Naive thymus-derived CD4-positive, alpha-beta T cell (primary cell): ENCODE measurements at regions of chr13 and their contacts with region 1.

Region 1: DNA sequence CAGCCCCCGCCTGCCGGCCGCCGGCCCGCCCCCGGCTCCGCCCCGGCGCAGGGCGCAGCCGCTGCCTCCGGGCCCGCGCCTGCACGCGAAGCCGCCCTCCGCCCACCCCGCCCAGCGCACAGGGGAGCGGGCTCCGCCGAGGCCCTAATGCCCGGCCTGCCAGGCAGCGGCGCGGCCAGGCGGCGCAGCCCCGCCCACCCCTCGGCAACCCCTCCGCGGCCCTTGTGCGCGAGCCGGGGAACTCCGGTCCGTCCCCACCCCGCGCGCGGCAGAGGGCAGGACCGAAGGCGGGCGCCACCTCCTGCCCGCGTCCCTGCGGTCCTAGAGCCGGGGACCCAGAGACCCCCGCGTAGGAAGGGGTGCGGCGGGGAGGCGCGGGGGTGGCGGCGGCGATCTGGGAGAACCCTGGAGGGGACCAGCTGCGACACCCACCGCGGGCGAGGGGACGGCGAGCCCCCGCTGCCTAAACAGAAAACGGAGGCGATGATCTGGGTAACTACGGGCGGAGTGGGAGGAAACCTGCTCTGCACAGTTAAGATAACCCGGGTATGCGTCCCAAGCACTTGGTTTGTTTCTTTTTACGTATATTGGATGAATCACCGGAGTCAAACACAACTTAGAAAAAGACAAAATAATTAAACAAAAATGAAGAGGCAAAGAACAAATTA is 350 bp upstream of the USP12 start:
- DNase-seq: peak; percentile 82 to 91 (median 88)
- ATAC-seq: peak; percentile 94
- H3K4me3 ChIP-seq: peak overlapping the region; percentile 58
- H3K4me3 Mint-ChIP-seq: peak overlapping the region; percentile 78 to 96 (median 88)
- H3K27ac ChIP-seq: peak overlapping the region; percentile 85
- H3K27ac Mint-ChIP-seq: peak overlapping the region; percentile 76 to 95 (median 88)
- H3K4me1 ChIP-seq: peaks cover 24 to 34% of the 10 kb centered on the region in 2 donors
- H3K4me1 Mint-ChIP-seq: peaks cover 23 to 49% (median 44%) of the 10 kb centered on the region in 7 donors
- H3K27me3 ChIP-seq: no peaks in the 10 kb centered on the region
- H3K27me3 Mint-ChIP-seq: no peaks in the 10 kb centered on the region

Region 2: DNA sequence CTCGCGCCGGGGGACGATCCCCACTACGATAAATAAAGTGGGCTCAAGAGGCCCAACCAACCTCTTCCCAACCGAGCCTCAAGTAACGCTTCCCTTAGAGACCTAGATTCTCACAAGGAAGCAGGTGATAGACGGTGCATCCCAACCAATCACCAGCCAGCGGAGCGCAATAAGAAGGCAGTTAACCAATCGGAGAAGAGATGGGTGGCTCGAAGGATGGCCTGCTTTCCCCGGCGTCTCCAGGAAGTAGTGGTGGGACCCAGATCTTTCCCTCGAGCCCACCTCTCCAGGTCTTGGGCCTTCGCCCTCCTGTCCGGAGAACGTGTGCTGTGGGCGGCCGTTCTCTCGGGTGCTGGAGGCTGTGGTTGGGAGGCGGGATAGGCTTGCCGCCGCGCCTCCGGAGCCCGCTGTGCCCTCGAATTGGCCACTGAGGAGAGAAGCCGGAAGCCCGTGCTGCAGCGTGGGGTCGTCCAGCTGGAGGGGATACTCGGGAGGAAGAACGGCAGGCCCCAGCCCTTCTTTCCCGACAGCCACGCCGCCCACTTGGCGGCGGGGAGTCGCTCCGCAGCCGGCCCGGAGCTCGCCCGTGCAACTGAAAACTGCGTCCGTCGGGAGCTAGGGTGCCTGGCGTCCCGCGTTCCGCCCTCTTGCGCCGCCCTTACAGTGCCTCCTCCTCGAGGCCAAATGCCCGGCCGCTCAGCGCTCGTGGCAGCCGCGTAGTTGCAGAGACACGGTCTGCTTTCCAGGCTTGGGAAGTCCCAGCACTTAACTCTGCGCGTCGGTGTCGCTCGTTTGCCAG is 950.0 kb before region 1 on chr13 and contains the start of gene RNF6:
- CTCF ChIA-PET with region 1: no interaction called
- POLR2A ChIA-PET with region 1: no interaction called
- intact Hi-C with region 1: loop called in 1 of 2 experiments (anchors 1 kb)
- DNase-seq: peak; percentile 83 to 92 (median 89)
- ATAC-seq: peak; percentile 95
- H3K4me3 ChIP-seq: peak within 1 kb of the TSS; percentile 96
- H3K4me3 Mint-ChIP-seq: peak within 1 kb of the TSS; percentile 95 to 100 (median 100)
- H3K27ac ChIP-seq: peak within 1 kb of the TSS; percentile 97
- H3K27ac Mint-ChIP-seq: peak within 1 kb of the TSS; percentile 93 to 100 (median 100)
- H3K4me1 ChIP-seq: peaks cover 16 to 17% of the 10 kb centered on the region in 2 donors
- H3K4me1 Mint-ChIP-seq: peaks cover 25 to 54% (median 49%) of the 10 kb centered on the region in 7 donors
- H3K27me3 ChIP-seq: no peaks in the 10 kb centered on the region
- H3K27me3 Mint-ChIP-seq: peaks cover 0 to 3% (median 0%) of the 10 kb centered on the region in 5 donors
- total RNA-seq, gene RNF6: 31.0 to 45.6 (median 44.6) TPM

Region 3: GRCh38 chr13:27044837-27045570 is 127.0 kb before region 1 on chr13:
- CTCF ChIA-PET with region 1: no interaction called
- POLR2A ChIA-PET with region 1: no interaction called
- intact Hi-C with region 1: loop called in 1 of 2 experiments (anchors 5 kb)
- DNase-seq: peak in 2 of 9 donors; percentile 9 to 15
- ATAC-seq: peak; percentile 72
- H3K4me3 ChIP-seq: no peak overlapping the region
- H3K4me3 Mint-ChIP-seq: peak overlapping the region in 2 of 10 donors; percentile 11 to 15
- H3K27ac ChIP-seq: no peak overlapping the region
- H3K27ac Mint-ChIP-seq: peak overlapping the region in 3 of 9 donors; percentile 43 to 70 (median 70)
- H3K4me1 ChIP-seq: peaks cover 0 to 5% of the 10 kb centered on the region in 2 donors
- H3K4me1 Mint-ChIP-seq: peaks cover 0 to 15% (median 7%) of the 10 kb centered on the region in 7 donors
- H3K27me3 ChIP-seq: no peaks in the 10 kb centered on the region
- H3K27me3 Mint-ChIP-seq: peaks cover 3 to 9% (median 6%) of the 10 kb centered on the region in 5 donors

Region 4: DNA sequence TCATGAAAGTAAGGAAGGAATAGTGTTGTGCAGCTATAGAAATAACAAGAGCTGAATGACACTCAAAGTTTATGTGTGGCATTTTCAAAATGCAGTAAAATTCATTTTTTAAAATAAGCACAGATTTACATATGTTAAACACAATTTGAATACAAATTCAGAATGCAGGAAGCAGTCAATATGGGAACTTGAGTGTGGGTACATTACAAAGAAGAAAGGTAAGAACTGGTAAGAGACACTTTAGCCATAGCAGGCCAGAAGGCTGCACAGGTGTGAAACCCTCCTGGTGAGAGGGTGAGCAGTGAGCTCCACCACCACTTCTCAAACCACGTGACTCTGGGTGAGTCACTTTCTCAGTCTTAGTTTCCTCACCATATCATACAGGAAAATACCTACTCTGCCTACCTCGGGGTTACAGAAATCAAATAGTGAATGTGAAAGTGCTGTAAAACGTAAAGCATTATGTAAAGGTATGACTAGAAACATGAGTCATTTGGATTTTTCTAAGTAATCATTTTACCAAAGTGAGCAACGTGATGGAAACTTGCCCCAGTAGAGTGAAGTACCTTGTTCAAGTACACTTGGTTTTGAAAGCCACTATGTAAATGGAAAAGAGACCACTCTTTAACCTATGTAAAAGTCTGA is 40.9 kb before region 1 on chr13:
- CTCF ChIA-PET with region 1: no interaction called
- POLR2A ChIA-PET with region 1: no interaction called
- intact Hi-C with region 1: loop called (anchors 1 to 5 kb)
- DNase-seq: peak in 3 of 9 donors; percentile 13 to 71 (median 46)
- ATAC-seq: peak; percentile 90
- H3K4me3 ChIP-seq: no peak overlapping the region
- H3K4me3 Mint-ChIP-seq: peak overlapping the region in 5 of 10 donors; percentile 29 to 71 (median 47)
- H3K27ac ChIP-seq: no peak overlapping the region
- H3K27ac Mint-ChIP-seq: peak overlapping the region in 5 of 9 donors; percentile 60 to 87 (median 76)
- H3K4me1 ChIP-seq: peaks cover 0 to 14% of the 10 kb centered on the region in 2 donors
- H3K4me1 Mint-ChIP-seq: peaks cover 46 to 89% (median 82%) of the 10 kb centered on the region in 7 donors
- H3K27me3 ChIP-seq: no peaks in the 10 kb centered on the region
- H3K27me3 Mint-ChIP-seq: no peaks in the 10 kb centered on the region

Region 5: GRCh38 chr13:27270594-27271520 is 98.9 kb after region 1 on chr13 and contains the start of gene RASL11A:
- CTCF ChIA-PET with region 1: no interaction called
- POLR2A ChIA-PET with region 1: interaction called, 3 read pairs
- intact Hi-C with region 1: loop called (anchors 1 kb)
- DNase-seq: peak; percentile 53 to 87 (median 76)
- ATAC-seq: peak; percentile 92
- H3K4me3 ChIP-seq: peak within 1 kb of the TSS; percentile 90
- H3K4me3 Mint-ChIP-seq: peak within 1 kb of the TSS; percentile 88 to 96 (median 92)
- H3K27ac ChIP-seq: peak within 1 kb of the TSS; percentile 75
- H3K27ac Mint-ChIP-seq: peak within 1 kb of the TSS; percentile 29 to 82 (median 75)
- H3K4me1 ChIP-seq: peaks cover 0 to 4% of the 10 kb centered on the region in 2 donors
- H3K4me1 Mint-ChIP-seq: peaks cover 9 to 35% (median 19%) of the 10 kb centered on the region in 7 donors
- H3K27me3 ChIP-seq: peaks cover 0 to 3% of the 10 kb centered on the region in 2 donors
- H3K27me3 Mint-ChIP-seq: peaks cover 0 to 45% (median 9%) of the 10 kb centered on the region in 5 donors
- total RNA-seq, gene RASL11A: 0.44 to 3.0 (median 0.86) TPM

Region 6: DNA sequence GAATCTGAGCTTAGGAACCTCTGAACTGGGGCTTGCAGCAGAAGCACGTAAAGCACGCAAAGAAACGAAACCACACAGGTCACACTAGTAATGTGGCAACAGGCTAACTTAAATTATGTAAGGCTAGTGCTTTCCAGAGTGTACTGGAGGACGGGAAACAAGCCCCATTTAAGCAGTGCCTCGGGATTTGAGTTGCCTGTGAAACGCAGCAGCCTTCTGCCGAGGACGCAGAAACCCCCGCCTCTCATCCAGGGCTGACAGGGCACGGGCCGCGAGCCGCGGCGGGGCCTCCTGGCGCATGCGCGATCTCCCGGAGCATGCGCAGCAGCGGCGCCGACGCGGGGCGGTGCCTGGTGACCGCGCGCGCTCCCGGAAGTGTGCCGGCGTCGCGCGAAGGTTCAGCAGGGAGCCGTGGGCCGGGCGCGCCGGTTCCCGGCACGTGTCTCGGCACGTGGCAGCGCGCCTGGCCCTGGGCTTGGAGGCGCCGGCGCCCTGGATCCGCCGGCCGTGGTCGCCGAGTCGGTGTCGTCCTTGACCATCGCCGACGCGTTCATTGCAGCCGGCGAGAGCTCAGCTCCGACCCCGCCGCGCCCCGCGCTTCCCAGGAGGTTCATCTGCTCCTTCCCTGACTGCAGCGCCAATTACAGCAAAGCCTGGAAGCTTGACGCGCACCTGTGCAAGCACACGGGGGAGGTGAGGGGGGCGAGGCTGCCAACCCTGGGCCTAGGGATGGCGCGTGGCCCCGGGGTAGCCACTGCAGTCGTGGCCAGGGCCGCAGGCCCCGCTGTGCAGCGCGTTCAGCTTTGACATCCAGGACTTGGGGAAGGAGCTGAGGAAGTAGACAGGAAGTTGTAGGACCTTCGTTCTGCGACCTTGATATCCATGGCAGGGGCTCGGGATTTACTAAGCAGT is 252.5 kb after region 1 on chr13 and contains the start of gene GTF3A:
- CTCF ChIA-PET with region 1: no interaction called
- POLR2A ChIA-PET with region 1: no interaction called
- intact Hi-C with region 1: loop called (anchors 2 kb)
- DNase-seq: peak; percentile 83 to 97 (median 93)
- ATAC-seq: peak; percentile 77
- H3K4me3 ChIP-seq: peak within 1 kb of the TSS; percentile 71
- H3K4me3 Mint-ChIP-seq: peak within 1 kb of the TSS; percentile 81 to 96 (median 92)
- H3K27ac ChIP-seq: peak within 1 kb of the TSS; percentile 86
- H3K27ac Mint-ChIP-seq: peak within 1 kb of the TSS; percentile 88 to 98 (median 95)
- H3K4me1 ChIP-seq: peaks cover 24 to 45% of the 10 kb centered on the region in 2 donors
- H3K4me1 Mint-ChIP-seq: peaks cover 27 to 47% (median 42%) of the 10 kb centered on the region in 7 donors
- H3K27me3 ChIP-seq: no peaks in the 10 kb centered on the region
- H3K27me3 Mint-ChIP-seq: no peaks in the 10 kb centered on the region
- total RNA-seq, gene GTF3A: 123 to 254 (median 206) TPM

Region 7: DNA sequence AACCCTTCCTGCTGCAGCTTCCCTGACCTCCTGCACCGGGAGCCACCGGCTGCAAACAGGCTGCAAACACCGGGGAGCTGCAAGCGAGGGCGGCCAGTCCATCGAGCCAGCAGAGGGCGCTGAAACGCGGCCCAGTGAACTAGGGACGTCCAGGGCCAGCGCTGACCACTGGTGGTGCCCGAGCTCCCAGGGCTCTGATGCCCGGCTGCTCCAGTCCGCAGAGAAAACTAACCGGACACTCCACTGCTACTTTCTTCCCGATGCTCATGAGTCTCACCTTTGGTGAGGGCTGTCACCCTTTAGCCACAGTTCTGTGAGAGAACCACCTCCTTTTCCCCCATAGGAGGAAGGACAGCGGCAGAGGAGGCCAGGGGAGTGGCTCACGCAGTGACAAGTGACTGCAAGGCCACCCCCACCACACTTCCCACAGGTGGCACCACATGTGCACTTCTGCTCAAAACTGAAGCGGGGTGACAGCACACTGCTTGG is 361.2 kb after region 1 on chr13:
- CTCF ChIA-PET with region 1: no interaction called
- POLR2A ChIA-PET with region 1: no interaction called
- intact Hi-C with region 1: no loop called
- DNase-seq: peak in 7 of 9 donors; percentile 17 to 51 (median 42)
- ATAC-seq: peak; percentile 83
- H3K4me3 ChIP-seq: no peak overlapping the region
- H3K4me3 Mint-ChIP-seq: peak overlapping the region in 6 of 10 donors; percentile 26 to 52 (median 44)
- H3K27ac ChIP-seq: no peak overlapping the region
- H3K27ac Mint-ChIP-seq: no peak overlapping the region
- H3K4me1 ChIP-seq: peaks cover 0 to 9% of the 10 kb centered on the region in 2 donors
- H3K4me1 Mint-ChIP-seq: peaks cover 0 to 12% (median 10%) of the 10 kb centered on the region in 7 donors
- H3K27me3 ChIP-seq: no peaks in the 10 kb centered on the region
- H3K27me3 Mint-ChIP-seq: peaks cover 0 to 17% (median 5%) of the 10 kb centered on the region in 5 donors